ENCODE measurements at regions of chr1 and their contacts with region 1.

Region 1: DNA sequence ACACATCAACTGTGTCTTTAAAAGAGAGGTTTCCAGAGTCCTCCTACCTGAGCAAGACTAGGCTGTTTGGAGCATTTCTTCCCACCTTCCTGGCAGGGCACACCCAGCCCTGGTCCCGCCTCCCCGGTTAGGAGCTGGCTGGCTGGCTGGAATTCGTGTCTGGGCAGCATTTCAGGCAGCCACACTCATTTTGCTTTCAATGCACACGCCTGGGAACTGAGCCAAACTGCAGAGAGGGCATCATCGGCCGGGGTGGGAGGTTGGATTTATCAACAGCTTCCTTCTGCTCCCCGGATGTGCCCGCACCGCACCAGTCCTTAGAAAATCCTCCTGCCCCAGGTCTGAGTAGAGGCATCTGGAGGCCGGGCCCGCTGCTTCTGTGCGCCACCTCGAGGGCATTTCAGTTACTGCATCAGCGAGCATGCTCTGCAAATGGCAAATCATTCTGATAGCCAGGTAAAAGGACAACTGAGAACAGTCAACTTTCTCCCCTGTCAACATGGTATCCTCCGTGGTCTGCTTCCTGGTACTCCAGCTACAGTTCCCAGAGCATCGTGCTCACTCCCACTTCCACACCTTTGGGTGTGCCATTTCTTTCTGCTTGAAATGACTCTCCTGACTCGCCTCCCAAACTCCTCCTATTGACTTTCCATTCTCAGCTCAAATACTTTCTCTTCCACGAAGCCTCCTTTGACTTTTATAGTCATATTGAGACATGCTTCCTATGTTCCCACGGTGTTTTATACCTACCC is 20.6 kb downstream of the TCEA3 start:
- DNase-seq: peak; percentile 98
- ATAC-seq: peak; percentile 93
- H3K4me3 ChIP-seq: peak overlapping the region; percentile 49
- H3K27ac ChIP-seq: peak overlapping the region; percentile 91
- H3K4me1 ChIP-seq: peaks cover 22% of the 10 kb centered on the region
- H3K27me3 ChIP-seq: no peaks in the 10 kb centered on the region
- CTCF ChIP-seq: peak; percentile 96

Region 2: DNA sequence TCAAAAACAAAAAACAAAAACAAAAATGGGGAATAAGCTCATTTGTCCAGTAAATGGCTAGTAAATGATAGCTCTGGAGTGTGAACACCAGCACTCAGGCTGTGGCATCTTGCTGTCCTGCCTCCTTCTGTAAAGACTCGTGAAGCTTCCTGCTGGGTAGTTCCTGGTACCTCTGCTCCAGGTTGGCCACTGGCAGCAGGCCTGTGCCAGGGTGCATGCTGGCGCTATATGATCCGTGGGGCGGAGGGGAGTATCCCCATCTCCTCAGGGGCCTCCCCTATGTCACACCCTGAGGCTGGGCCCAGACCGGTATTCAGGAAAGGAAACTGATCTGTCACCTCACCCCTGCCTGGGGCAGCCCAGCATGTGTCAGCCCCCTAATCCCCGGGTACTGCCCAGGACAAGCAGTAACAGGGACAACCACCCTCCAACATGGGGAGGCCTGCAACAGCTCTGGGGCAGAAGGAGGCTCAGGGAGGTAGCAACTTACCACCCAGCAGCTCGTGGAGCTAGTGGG is 1880.6 kb before region 1 on chr1:
- CTCF ChIA-PET with region 1: interaction called, 10 read pairs
- POLR2A ChIA-PET with region 1: no interaction called
- intact Hi-C with region 1: no loop called
- DNase-seq: no peak
- ATAC-seq: no peak
- H3K4me3 ChIP-seq: no peak overlapping the region
- H3K27ac ChIP-seq: no peak overlapping the region
- H3K4me1 ChIP-seq: no peaks in the 10 kb centered on the region
- H3K27me3 ChIP-seq: no peaks in the 10 kb centered on the region
- CTCF ChIP-seq: no peak

Region 3: GRCh38 chr1:23184212-23184934 is 219.5 kb before region 1 on chr1:
- CTCF ChIA-PET with region 1: no interaction called
- POLR2A ChIA-PET with region 1: no interaction called
- intact Hi-C with region 1: no loop called
- DNase-seq: peak; percentile 64
- ATAC-seq: peak; percentile 14; the same call in 1 of the 2 replicates
- H3K4me3 ChIP-seq: 0 out of 2 replicates have a peak overlapping the region, but pooled peaks have one; percentile 41
- H3K27ac ChIP-seq: no peak overlapping the region
- H3K4me1 ChIP-seq: peaks cover 23% of the 10 kb centered on the region
- H3K27me3 ChIP-seq: no peaks in the 10 kb centered on the region
- CTCF ChIP-seq: peak; percentile 86

Region 4: DNA sequence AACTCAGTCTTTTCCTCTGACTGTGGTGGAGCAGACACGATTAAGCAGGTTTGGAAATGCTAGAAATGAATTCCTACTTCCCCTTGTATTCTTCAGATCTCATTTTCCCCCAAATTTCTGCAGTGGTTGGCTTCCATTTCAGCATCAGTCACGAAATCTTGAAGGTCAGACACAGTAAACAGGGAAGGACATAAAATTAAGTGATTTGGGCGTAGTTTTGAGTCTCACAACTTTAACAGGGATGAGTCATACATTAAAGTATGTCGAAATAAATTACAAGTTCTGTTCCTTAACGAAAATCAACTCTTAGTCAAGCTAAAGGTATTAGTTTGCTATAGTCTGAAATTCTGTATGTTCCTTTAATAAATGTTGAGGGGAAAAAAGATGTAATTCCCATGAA is 121.0 kb before region 1 on chr1:
- CTCF ChIA-PET with region 1: interaction called, 3 read pairs
- POLR2A ChIA-PET with region 1: no interaction called
- intact Hi-C with region 1: loop called (anchors 5 kb)
- DNase-seq: peak; percentile 84
- ATAC-seq: peak; percentile 62
- H3K4me3 ChIP-seq: peak overlapping the region; percentile 6; the same call in 1 of the 2 replicates
- H3K27ac ChIP-seq: peak overlapping the region; percentile 73
- H3K4me1 ChIP-seq: peaks cover 44% of the 10 kb centered on the region
- H3K27me3 ChIP-seq: no peaks in the 10 kb centered on the region
- CTCF ChIP-seq: no peak

Region 5: DNA sequence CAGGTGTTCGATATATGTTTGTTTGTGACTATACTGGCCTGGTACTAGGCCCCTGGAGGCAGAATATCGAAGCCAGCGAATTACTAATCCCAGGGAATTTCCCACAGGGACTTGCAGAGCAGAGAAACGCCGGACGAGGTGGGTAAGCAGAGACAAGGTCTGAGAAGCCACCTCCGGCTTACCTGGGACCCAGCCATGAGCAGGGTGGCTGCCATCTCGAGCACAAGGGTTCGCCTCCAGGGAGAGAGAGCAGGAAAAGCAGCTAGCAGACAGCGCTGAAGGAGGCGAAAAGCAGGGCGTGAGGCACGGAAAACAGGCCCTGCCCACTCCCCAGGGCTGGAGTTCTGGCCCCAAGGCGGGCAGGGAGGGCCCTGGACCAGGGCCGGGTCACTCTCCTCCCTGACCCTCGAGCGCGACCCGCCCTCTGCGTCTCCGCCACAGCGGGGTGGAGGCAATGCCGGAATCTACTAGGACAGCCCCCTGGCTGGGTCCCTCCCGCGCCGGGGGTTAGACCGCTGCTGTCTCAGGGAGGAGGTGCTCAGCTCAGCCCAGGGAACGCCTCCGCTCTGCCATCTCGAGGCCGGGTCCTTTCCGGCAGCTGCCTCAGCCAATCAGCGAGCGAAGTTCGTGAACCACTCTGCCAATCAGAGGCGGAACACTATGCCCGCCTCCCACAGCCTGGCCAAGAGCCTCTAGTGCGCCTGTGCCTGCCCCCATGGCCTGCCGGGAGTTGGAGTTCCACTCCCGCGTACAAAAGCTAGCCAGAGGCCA is 35.9 kb before region 1 on chr1:
- CTCF ChIA-PET with region 1: interaction called, 13 read pairs
- POLR2A ChIA-PET with region 1: interaction called, 3 read pairs
- intact Hi-C with region 1: loop called (anchors 1 kb)
- DNase-seq: peak; percentile 98
- ATAC-seq: peak; percentile 88
- H3K4me3 ChIP-seq: peak overlapping the region; percentile 93
- H3K27ac ChIP-seq: peak overlapping the region; percentile 74
- H3K4me1 ChIP-seq: peaks cover 26% of the 10 kb centered on the region
- H3K27me3 ChIP-seq: no peaks in the 10 kb centered on the region
- CTCF ChIP-seq: no peak